ENCODE measurements at regions of chr4 and their contacts with region 1.

Region 1: DNA sequence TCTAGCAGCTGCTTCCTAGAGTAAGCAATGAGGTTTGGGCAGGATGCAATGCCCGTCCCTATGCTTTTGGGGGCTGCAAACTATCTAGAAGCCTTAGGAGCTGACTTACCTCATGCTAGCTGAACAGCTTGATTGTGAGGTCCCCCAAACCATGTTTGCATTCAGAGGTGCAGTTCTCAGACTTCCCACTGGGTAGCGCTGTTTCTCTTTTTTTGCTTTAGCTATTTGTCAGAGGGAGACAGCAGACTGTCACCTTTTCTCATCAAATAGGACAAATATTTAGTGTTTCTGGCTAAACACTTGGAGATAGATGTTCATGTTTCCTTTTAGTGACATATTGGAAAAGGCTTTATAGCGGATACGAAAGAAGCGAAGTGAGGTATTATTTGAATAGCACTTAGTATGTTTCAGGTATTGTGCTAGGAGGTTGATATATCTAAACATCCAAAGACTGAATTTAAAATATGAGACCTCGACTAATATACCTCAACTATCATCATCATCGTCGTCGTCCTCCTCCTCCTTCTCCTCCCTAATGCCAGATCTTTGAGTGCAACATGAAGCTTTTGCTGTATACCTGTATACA is 18.7 kb upstream of the TMEM192 start:
- DNase-seq: peak; percentile 82
- ATAC-seq: peak; percentile 76

Region 2: DNA sequence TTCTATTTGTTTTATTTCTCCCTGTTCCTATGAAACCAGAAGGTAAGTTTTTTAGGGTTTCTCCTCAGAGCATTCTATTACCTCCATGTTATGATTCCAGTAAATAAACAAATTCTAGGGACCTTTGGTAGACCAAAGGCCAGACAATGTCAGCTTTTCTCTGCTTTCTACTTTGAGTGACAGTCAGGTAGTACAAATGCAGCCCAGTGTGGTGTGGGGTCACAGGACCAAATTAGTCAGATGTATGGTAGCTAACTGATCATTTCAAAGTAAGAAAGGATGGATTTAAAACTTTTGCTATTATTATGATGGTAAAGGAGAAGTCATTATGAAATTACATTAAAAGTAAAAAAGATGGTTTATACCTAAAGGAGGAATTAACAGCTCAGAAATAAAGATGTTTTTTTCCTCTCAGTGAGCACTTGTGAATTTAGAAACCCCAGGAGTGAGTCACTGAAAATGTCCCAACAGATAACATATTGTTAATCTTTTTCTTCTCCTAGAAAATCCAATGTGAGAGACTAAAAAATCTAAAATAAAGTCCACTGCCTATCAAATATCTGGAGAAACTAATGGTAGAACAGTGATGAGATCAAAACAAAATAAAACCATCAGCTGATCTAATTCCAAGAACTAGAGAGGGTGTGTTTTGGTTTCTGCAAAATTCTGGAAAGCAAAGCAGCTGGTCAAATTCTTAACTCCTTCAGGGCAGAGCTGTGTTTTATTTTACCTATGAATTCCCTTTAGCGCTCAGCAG is 59.4 kb after region 1 on chr4:
- intact Hi-C with region 1: no loop called
- DNase-seq: no peak
- ATAC-seq: no peak

Region 3: GRCh38 chr4:165331359-165331758 is 200.0 kb after region 1 on chr4:
- intact Hi-C with region 1: loop called (anchors 10 kb)
- DNase-seq: no peak
- ATAC-seq: no peak

Region 4: DNA sequence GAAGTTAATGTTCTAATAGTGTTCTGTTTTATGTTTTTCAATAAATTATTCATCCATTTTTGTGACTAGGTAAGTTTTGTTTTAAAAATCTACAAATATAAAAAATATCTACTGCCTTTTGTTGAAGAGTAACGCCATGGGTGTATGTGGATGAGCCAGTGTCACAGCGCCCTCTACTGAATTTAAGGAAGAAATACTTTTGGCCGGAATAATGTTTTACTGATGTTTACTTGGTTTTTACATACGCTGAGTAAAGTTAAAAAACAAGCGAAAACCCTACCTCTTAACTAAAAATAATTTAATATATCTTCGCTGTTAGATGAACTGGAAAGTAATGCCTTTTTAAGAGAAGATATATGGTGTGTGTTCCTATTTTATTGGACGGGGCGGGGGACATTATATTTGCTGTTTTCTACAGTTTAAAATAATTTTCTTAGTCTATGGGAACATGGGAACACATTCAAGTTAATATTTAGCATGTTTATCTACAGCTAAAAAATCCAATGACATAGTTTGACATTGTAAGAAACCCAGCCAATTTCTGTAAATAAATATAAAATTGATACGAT is 333.6 kb after region 1 on chr4:
- intact Hi-C with region 1: loop called (anchors 5 kb)
- DNase-seq: no peak
- ATAC-seq: peak; percentile 63

Measured in sciatic nerve (tissue), 2 donors.